PC-9 (cell line): ENCODE measurements at regions of chr9 and their contacts with region 1.

Region 1: DNA sequence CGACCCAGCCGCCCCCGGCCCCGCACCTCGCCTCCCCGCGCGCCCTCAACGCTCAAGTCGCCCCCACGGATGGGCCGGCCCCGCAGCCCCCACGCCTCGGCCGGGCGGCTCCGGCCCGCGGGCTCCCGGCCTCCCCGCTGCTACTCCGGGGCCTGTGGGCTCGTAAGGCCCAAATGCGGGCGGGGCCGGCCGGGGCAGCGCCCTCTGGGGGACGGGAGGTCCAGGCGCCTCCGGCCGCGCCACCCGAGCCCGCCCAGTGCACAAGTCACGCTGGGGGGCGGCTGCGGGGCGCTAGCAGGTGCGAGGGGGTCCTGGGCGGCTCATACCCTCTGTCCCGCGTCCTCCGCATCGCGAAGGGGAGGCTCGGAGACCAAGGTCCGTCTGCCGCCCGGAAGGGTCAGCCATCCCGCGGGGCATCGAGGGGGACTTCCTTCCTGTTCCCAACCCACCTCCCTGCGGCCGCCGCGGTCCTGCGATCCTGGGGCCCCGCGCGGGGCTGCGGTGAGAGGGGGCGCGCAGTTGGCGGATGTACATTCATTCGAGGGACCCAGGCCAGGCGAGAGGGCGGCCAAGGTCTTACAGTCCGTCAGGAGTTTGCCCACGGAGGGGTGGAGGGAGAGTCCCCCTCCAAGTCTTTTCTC is at the start of gene CIZ1:
- DNase-seq: peak; percentile 46 to 83
- H3K4me3 ChIP-seq: peak within 1 kb of the TSS; percentile 83
- H3K27ac ChIP-seq: peak within 1 kb of the TSS; percentile 77
- H3K4me1 ChIP-seq: peaks cover 16% of the 10 kb centered on the region
- H3K27me3 ChIP-seq: no peaks in the 10 kb centered on the region
- CTCF ChIP-seq: peak; percentile 65
- total RNA-seq, gene CIZ1: 164 and 213 TPM in 2 replicates

Region 2: DNA sequence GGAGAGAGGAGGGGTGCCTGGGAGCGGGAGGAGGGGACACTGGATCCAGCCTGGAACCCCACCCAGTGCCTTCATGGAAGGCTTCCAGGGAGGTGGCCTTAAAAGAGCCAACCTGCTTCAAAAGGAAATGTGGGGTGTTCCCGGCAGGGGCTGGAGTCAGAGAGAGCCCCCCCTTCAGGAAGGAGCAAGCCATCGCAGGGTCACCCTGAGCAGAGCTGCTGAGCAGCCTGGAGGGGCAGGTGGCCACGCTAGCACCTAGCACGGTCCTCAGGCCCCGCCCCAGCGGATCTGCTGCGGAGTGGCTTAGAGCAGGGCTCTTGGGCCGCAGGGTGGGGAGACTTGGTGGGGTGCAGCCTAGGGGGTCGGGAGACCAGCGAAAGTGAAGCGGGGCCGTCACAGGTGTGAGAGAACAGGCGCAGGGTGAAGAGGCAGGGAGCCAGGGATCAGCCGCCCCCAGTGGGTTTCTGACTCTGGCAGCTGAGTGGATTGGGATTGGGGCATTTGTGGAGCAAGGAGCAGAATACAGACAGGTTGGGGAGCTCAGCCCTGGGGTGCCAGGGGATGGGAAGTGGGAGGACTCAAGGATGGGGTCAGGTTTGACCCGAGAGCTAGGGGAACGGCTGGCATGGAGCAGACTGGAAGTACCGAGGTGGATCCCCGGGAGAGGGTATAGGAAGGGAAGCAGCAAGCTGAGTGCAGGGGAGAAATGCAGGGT is 40.8 kb before region 1 on chr9:
- CTCF ChIA-PET with region 1: interaction called, 3 read pairs
- POLR2A ChIA-PET with region 1: interaction called, 5 read pairs
- intact Hi-C with region 1: loop called (anchors 5 kb)
- DNase-seq: peak; percentile 79 to 94
- H3K4me3 ChIP-seq: peak overlapping the region; percentile 97
- H3K27ac ChIP-seq: peak overlapping the region; percentile 99
- H3K4me1 ChIP-seq: peaks cover 44% of the 10 kb centered on the region
- H3K27me3 ChIP-seq: no peaks in the 10 kb centered on the region
- CTCF ChIP-seq: peak; percentile 64

Region 3: GRCh38 chr9:128203024-128203706 is 11.6 kb after region 1 on chr9 and contains the start of gene DNM1:
- CTCF ChIA-PET with region 1: interaction called, 3 read pairs
- POLR2A ChIA-PET with region 1: interaction called, 17 read pairs
- intact Hi-C with region 1: no loop called
- DNase-seq: peak in 1 of 2 experiments; percentile 77
- H3K4me3 ChIP-seq: peak within 1 kb of the TSS; percentile 68
- H3K27ac ChIP-seq: no peak within 1 kb of the TSS
- H3K4me1 ChIP-seq: 0 out of 2 replicates have a peak, but pooled peaks cover 5% of the 10 kb centered on the region
- H3K27me3 ChIP-seq: no peaks in the 10 kb centered on the region
- CTCF ChIP-seq: peak; percentile 60
- total RNA-seq, gene DNM1: 134 and 148 TPM in 2 replicates

Region 4: GRCh38 chr9:128216781-128217553 is 25.4 kb after region 1 on chr9:
- CTCF ChIA-PET with region 1: interaction called, 9 read pairs
- POLR2A ChIA-PET with region 1: interaction called, 21 read pairs
- intact Hi-C with region 1: no loop called
- DNase-seq: no peak
- H3K4me3 ChIP-seq: no peak overlapping the region
- H3K27ac ChIP-seq: no peak overlapping the region
- H3K4me1 ChIP-seq: peaks cover 10% of the 10 kb centered on the region
- H3K27me3 ChIP-seq: no peaks in the 10 kb centered on the region
- CTCF ChIP-seq: no peak